Heart right ventricle (tissue), 16 donors: ENCODE measurements at regions of chr11 and their contacts with region 1.

Region 1: DNA sequence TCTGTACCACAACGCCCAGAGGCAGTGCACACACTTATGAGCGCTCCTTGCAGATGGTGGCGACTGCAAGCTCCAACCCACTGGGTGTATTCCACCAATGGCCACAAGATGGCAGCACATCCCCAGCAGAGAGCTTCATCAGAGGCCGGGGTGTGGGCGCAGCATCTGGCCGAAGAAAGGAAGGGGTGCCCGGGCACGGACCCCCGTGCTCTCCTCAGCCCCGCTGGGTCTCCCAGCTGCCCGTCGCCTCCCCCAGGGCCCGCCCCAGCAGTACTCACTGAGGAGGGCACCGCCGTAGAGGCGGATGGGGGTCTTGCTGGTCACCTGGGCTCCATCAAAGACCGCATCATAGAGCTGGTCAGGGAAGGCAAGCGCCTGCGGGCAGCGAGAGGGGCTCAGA is 14.2 kb downstream of the TP53I11 start:
- DNase-seq: peak; percentile 79 to 82
- ATAC-seq: peak; percentile 16 to 67 (median 56)
- H3K4me3 ChIP-seq: no peak overlapping the region
- H3K27ac ChIP-seq: no peak overlapping the region
- H3K4me1 ChIP-seq: peaks cover 20 to 52% (median 34%) of the 10 kb centered on the region in 9 donors
- H3K27me3 ChIP-seq: no peaks in the 10 kb centered on the region
- CTCF ChIP-seq: peak in 8 of 9 donors; percentile 92 to 97 (median 95)

Region 2: DNA sequence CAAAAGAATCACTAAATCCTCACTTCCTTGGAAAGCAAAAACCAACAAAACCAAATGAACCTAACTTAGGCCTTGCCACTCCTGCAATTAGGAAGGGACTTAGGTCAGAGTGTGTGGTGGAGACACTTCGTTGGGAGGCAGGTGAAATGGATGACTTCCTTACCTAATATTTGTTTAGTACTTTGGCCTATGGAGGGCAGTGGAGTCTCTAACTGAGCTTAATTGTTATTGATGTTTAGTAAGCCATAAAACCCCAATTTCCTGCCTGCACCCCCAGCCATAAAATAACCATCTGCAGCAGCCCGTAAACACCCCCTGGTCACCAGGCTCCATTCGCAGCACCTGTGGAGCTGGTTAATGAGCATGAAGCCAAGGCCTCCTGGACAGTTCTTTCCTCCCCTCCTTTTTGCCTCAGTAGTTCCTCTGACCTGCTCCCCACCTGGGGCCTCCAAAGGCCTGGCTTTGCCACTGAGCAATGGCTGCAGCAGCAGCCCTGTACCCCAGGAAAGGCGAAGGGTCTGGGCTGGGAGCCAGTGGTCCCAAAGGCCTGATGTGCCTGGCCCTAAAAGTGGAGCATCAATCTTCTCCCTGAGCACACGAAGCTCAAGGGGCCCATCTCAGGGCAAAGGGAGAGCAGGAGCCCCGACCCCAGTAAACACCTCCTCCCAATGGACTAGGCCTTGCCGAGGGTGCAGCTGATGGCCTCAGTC is 365.2 kb after region 1 on chr11:
- intact Hi-C with region 1: loop called in 6 of 10 experiments (anchors 10 kb)
- DNase-seq: no peak
- ATAC-seq: no peak
- H3K4me3 ChIP-seq: no peak overlapping the region
- H3K27ac ChIP-seq: no peak overlapping the region
- H3K4me1 ChIP-seq: no peaks in the 10 kb centered on the region
- H3K27me3 ChIP-seq: peaks cover 0 to 9% (median 0%) of the 10 kb centered on the region in 7 donors
- CTCF ChIP-seq: no peak